Sciatic nerve (tissue), 2 donors: ENCODE measurements at regions of chr12 and their contacts with region 1.

Region 1: DNA sequence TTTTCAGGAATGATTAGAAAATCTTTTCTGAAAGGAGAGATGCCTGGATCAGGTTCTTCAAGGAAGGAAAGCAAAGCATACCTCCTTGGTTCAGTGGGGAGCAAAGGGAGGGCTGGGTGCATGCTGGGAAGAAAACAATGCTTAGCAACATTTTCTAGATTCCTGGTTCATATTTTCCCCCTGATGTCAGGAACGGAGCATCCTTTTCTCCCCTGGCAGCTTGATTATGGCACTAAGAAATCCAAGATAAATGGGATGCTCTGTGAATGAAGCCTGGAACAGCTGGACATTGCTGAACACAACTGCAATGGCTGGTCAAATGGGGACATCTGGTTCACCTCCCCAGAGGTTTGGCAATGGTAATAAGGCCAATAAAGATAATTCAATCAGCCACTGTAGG is 50.9 kb downstream of the KCNA5 start:
- DNase-seq: no peak
- ATAC-seq: no peak

Region 2: GRCh38 chr12:4786797-4787196 is 307.8 kb before region 1 on chr12:
- intact Hi-C with region 1: loop called (anchors 5 kb)
- DNase-seq: no peak
- ATAC-seq: no peak